ENCODE measurements at regions of chr2 and their contacts with region 1.

Region 1: DNA sequence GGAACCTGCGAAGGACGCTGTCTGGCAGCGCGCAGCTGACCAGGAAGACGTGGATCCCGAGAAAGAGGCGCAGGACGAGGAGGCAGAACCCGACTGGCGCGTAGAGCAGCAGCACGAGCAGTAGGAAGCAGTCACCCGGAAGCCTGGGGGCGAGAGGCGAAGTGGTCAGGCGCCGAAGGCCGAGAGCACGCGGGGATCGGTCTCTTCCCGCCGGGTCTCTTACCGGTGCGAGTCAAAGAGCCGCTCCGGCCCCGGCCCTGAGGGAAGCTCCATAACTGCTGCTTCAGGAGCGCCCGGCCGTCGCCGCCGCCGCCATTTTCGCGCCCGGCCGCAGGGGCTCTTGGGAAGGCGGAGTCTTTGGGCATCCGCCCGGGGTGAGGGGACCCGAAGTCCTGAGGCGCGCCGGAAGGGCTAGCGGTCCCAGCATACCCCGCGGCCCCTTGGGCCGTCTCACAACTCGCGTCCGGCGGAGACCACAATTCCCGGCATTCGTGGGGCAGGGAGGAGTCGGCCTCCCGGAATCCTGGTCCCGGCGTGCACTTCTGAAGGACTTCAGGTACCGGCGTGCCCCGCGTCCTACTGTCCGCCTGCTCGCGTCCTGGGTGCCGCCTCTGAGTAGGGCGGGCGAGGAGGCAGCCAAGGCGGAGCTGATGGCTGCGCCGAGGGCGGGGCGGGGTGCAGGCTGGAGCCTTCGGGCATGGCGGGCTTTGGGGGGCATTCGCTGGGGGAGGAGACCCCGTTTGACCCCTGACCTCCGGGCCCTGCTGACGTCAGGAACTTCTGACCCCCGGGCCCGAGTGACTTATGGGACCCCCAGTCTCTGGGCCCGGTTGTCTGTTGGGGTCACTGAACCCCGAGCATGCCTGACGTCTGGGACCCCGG is at the starts of genes AUP1 and HTRA2:
- DNase-seq: peak; percentile 98
- CTCF ChIP-seq: no peak

Region 2: GRCh38 chr2:74507145-74507925 is 22.3 kb before region 1 on chr2 and contains the start of gene PCGF1:
- CTCF ChIA-PET with region 1: interaction called, 21 read pairs
- POLR2A ChIA-PET with region 1: interaction called, 5 read pairs
- DNase-seq: peak; percentile 97
- CTCF ChIP-seq: peak; percentile 61

Region 3: GRCh38 chr2:74548900-74549826 is 19.6 kb after region 1 on chr2:
- CTCF ChIA-PET with region 1: interaction called, 16 read pairs
- POLR2A ChIA-PET with region 1: interaction called, 3 read pairs
- DNase-seq: peak; percentile 81
- CTCF ChIP-seq: no peak

Region 4: GRCh38 chr2:74554646-74555531 is 25.3 kb after region 1 on chr2 and contains the start of gene DOK1:
- CTCF ChIA-PET with region 1: interaction called, 16 read pairs
- POLR2A ChIA-PET with region 1: interaction called, 3 read pairs
- DNase-seq: peak; percentile 90
- CTCF ChIP-seq: no peak